ENCODE measurements at regions of chr1 and their contacts with region 1.

Region 1: GRCh38 chr1:29033829-29034466 is 89.8 kb downstream of the TMEM200B start:
- DNase-seq: no peak
- ATAC-seq: peak; percentile 34
- H3K4me3 Mint-ChIP-seq: no peak overlapping the region
- H3K27ac Mint-ChIP-seq: no peak overlapping the region
- H3K4me1 Mint-ChIP-seq: no peaks in the 10 kb centered on the region
- H3K27me3 Mint-ChIP-seq: no peaks in the 10 kb centered on the region
- CTCF ChIP-seq: no peak

Region 2: DNA sequence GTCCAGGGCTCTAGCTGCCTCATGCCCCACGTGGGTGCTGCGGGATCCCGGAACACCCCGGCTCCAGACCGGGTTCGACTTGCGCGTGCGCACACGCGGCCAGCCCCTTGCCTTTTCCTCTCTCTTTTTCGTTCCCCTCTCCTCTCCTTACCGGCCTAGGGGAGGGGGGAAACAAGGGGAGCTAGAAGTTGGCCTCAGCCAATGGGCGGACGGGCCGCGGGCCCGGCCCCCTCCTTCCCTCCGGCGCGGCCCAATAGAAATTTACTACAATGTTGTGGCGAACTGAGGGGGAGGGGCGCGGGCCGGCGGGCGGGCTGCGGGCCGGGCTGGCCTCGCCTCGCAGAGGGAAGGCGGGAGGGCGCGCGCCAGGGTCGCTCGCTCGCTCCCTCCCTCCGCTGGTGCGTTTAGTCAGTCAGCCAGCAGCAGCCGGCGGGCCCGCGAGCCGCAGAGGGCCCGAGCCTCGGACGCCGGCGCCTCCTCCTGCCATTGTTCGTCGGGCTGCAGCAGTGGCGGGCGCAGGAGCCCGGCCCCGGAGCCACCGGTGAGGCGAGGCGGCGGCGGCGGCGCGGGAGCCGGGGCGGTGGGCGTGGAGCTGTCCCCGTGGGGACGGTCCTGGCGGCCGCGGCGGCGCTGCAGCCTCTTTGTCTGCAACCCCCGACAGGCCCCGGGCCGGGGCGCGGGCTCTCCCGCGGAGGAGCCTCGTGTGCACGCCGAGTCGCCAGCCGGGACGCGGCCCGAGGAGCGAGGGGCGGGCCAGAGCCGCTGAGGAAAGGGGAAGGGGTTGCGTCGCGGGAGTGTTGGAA is 119.5 kb before region 1 on chr1 and contains the start of gene EPB41:
- CTCF ChIA-PET with region 1: interaction called, 10 read pairs
- POLR2A ChIA-PET with region 1: interaction called, 3 read pairs
- intact Hi-C with region 1: no loop called
- DNase-seq: peak; percentile 86
- ATAC-seq: peak; percentile 93
- H3K4me3 Mint-ChIP-seq: peak within 1 kb of the TSS; percentile 97
- H3K27ac Mint-ChIP-seq: peak within 1 kb of the TSS; percentile 92
- H3K4me1 Mint-ChIP-seq: peaks cover 46% of the 10 kb centered on the region
- H3K27me3 Mint-ChIP-seq: no peaks in the 10 kb centered on the region
- CTCF ChIP-seq: no peak
- total RNA-seq, gene EPB41: 73.8 and 74.0 TPM in 2 replicates

Region 3: DNA sequence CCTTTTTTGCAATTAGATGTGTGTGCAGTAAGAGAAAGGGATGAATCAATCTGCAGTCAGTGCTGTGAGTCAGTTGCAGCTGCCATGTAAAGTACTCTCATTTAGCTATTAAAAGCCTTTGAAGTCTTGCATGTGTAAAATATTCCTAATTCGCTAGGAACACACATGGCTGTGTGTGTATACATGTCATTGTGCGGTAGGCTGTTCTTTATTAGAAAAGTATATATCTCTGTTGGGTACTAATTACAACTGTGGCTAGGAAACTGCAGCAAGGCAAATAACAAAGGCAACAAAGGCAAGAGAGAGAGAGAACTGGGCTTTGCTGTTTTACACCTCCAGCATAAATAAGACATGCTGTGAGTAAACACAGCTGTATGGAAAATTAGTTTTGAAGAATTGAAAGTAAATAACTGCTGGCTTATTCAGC is 77.9 kb before region 1 on chr1:
- CTCF ChIA-PET with region 1: no interaction called
- POLR2A ChIA-PET with region 1: no interaction called
- intact Hi-C with region 1: no loop called
- DNase-seq: no peak
- ATAC-seq: no peak
- H3K4me3 Mint-ChIP-seq: no peak overlapping the region
- H3K27ac Mint-ChIP-seq: no peak overlapping the region
- H3K4me1 Mint-ChIP-seq: peaks cover 19% of the 10 kb centered on the region
- H3K27me3 Mint-ChIP-seq: no peaks in the 10 kb centered on the region
- CTCF ChIP-seq: no peak

Region 4: DNA sequence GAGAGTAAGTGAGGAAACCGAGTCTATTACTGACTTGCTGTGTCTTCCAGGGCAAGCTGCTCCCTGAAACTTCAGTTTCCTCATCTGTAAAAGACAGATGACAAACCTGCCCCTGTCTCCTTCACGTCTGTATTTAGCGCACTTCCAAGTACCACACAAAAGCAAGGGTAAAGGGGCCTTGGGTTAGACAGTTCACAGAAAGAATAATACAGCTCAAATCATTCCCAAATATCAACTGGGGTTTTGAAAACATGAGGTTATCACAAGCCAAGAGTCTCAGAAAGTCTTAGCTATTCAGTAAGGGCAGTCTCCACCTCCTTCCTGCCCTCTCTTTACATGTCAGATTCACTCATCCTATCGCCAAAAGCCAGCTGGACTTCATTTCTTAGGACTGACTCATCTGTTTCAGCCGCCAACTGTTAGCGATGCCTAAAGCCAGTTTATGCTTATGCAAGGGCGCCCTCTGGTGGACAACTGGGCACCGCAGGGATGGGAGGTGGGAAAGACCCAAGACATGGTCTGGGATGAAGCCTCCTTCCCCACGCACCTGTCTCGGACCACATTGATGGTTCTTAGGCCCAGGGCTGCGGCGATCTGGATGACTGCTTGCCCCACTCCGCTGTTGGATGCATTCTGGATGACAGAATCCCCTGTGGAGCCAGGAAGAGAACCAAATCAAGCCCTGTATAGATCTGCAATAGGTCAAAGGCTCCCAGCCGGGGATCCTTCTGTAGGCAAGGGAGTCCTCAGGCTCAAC is 168.8 kb after region 1 on chr1:
- CTCF ChIA-PET with region 1: interaction called, 11 read pairs
- POLR2A ChIA-PET with region 1: no interaction called
- intact Hi-C with region 1: loop called (anchors 1 kb)
- DNase-seq: peak; percentile 80
- ATAC-seq: peak; percentile 98
- H3K4me3 Mint-ChIP-seq: no peak overlapping the region
- H3K27ac Mint-ChIP-seq: no peak overlapping the region
- H3K4me1 Mint-ChIP-seq: peaks cover 3% of the 10 kb centered on the region
- H3K27me3 Mint-ChIP-seq: no peaks in the 10 kb centered on the region
- CTCF ChIP-seq: no peak

Measured in activated B cell treated with CpG ODN at 0.5 μM for 24 hours (primary cell).